ENCODE measurements at regions of chr7 and their contacts with region 1.

Region 1: GRCh38 chr7:64313740-64314491 is at the start of gene ZNF736:
- DNase-seq: peak; percentile 82
- H3K4me3 Mint-ChIP-seq: peak within 1 kb of the TSS; percentile 96
- H3K27ac Mint-ChIP-seq: peak within 1 kb of the TSS; percentile 95
- H3K4me1 Mint-ChIP-seq: peaks cover 25% of the 10 kb centered on the region
- H3K27me3 Mint-ChIP-seq: no peaks in the 10 kb centered on the region
- total RNA-seq, gene ZNF736: 19.8 and 21.3 TPM in 2 replicates

Region 2: GRCh38 chr7:64902806-64903721 is 589.1 kb after region 1 on chr7 and contains the start of gene ZNF273:
- intact Hi-C with region 1: loop called (anchors 2 kb)
- DNase-seq: peak; percentile 87
- H3K4me3 Mint-ChIP-seq: peak within 1 kb of the TSS; percentile 98
- H3K27ac Mint-ChIP-seq: peak within 1 kb of the TSS; percentile 93
- H3K4me1 Mint-ChIP-seq: peaks cover 29% of the 10 kb centered on the region
- H3K27me3 Mint-ChIP-seq: no peaks in the 10 kb centered on the region
- total RNA-seq, gene ZNF273: 8.5 and 9.3 TPM in 2 replicates

Measured in activated T-helper 1 cell treated with anti-CD3 and anti-CD28 coated beads, Interleukin-12 subunit alpha, Interleukin-12 subunit beta, Interleukin-2, Interleukin-4 antibody, amounts not matched to agents 30 ng/mL and 10 ng/mL and 1 ng/mL, durations not matched to agents 14 hours and 24 hours and 36 hours (primary cell).